ENCODE measurements at regions of chr12 and their contacts with region 1.

Region 1: GRCh38 chr12:92943482-92944250 is 14.6 kb upstream of the EEA1 start:
- DNase-seq: no peak
- ATAC-seq: peak; percentile 70 to 79; a peak in 4 of 6 replicates
- H3K4me3 ChIP-seq: no peak overlapping the region
- H3K27ac ChIP-seq: no peak overlapping the region
- H3K4me1 ChIP-seq: peaks cover 10% of the 10 kb centered on the region; the same call in 1 of the 3 replicates
- CTCF ChIP-seq: peak; percentile 28; the same call in 2 of the 3 replicates
- EP300 ChIP-seq: no peak
- POLR2A ChIP-seq: no peak
- RAD21 ChIP-seq: peak in 1 of 2 experiments; percentile 22; a peak in 1 of 5 replicates

Region 2: DNA sequence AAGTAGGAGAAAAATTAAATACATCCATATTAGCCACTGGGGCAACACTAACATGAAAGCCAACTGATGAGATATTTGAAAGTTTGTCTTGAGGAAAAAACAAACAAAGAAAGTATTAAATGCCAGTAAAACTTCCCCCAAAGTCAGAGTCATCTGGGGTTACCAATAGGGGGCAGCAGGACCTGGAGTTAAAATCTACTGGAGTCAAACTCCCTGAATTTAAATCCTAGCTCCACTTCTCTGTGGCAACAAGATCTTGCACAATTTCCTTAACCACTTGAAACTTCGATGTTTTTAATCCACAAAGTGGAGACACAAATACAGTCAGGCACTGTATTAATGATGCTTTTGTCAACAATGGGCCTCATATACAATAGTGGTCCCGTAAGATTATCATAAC is 226.5 kb before region 1 on chr12:
- CTCF ChIA-PET with region 1: no interaction called
- POLR2A ChIA-PET with region 1: interaction called, 10 read pairs
- DNase-seq: no peak
- ATAC-seq: peak in 1 of 2 experiments; percentile 36; a peak in 2 of 6 replicates
- H3K4me3 ChIP-seq: no peak overlapping the region
- H3K27ac ChIP-seq: no peak overlapping the region
- H3K4me1 ChIP-seq: peaks cover 12% of the 10 kb centered on the region; the same call in 1 of the 3 replicates
- CTCF ChIP-seq: 0 out of 3 replicates have a peak, but pooled peaks have one; percentile 14
- EP300 ChIP-seq: no peak
- POLR2A ChIP-seq: no peak
- RAD21 ChIP-seq: peak in 1 of 2 experiments; percentile 52; a peak in 2 of 5 replicates

Region 3: GRCh38 chr12:93042283-93042682 is 98.6 kb after region 1 on chr12:
- CTCF ChIA-PET with region 1: no interaction called
- POLR2A ChIA-PET with region 1: no interaction called
- DNase-seq: no peak
- ATAC-seq: no peak
- H3K4me3 ChIP-seq: no peak overlapping the region
- H3K27ac ChIP-seq: no peak overlapping the region
- H3K4me1 ChIP-seq: no peaks in the 10 kb centered on the region
- CTCF ChIP-seq: no peak
- EP300 ChIP-seq: no peak
- POLR2A ChIP-seq: no peak
- RAD21 ChIP-seq: no peak

Measured in A549 (cell line).